OCI-LY7 (cell line): ENCODE measurements at regions of chr2 and their contacts with region 1.

Region 1: DNA sequence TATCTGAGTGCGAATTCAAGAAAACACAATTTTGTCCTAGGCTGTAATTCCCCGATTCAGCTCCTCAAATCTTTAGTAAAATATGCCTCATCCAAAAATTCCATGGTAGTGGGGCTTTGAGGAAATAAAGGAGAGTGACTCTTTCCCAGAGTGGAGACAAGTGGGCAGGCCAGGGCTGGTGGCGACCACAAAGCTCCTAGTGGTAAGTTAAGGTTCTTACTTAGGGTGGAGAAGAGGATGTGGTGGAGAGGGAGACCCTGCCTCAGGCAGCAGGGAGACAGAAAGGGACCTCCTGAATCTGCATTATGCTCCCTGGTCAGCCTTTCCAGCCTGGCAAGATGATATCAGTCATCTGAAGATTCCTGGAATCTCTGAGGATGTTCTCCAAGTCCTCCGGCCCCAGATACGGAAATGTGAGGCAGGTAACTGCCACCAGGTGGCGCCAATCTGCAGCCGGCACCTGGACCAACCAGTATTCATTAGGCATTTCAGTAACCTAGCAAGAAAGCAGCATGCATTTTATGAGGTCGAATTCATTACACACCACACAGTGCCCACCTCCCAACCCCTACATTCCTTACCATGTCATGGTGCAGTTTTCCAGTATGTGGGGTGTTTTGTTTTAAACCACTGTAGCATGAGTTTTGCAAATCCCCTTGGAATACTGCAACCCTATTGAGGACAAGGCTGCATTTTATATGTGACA is 106.4 kb downstream of the POLE4 start:
- DNase-seq: peak; percentile 51
- H3K4me3 ChIP-seq: no peak overlapping the region
- H3K27ac ChIP-seq: no peak overlapping the region
- H3K4me1 ChIP-seq: no peaks in the 10 kb centered on the region
- CTCF ChIP-seq: peak; percentile 98

Region 2: GRCh38 chr2:74919827-74920226 is 145.0 kb before region 1 on chr2:
- CTCF ChIA-PET with region 1: no interaction called
- POLR2A ChIA-PET with region 1: no interaction called
- intact Hi-C with region 1: loop called (anchors 2 kb)
- DNase-seq: peak; percentile 62
- H3K4me3 ChIP-seq: peak overlapping the region; percentile 22
- H3K27ac ChIP-seq: no peak overlapping the region
- H3K4me1 ChIP-seq: no peaks in the 10 kb centered on the region
- CTCF ChIP-seq: peak; percentile 81

Region 3: DNA sequence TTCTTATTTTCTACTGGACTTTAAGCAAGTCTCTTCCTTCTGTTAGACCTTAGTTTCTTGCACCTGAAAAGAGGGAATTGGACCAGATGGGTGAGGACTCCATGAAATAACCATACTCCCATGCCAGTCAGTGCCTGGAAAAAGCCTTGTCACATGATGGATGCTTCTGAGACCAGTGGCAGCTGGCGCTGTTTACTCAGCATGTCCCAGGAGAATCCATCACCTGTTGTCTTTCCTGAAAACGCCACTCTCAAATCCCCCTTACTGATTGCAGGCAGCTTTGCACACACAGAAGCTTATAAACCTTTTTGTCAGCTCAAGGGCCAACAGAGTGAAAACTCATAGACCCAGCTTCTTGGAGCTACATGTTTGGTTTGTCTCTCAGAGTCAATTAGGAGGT is 11.2 kb after region 1 on chr2:
- CTCF ChIA-PET with region 1: no interaction called
- POLR2A ChIA-PET with region 1: no interaction called
- intact Hi-C with region 1: no loop called
- DNase-seq: no peak
- H3K4me3 ChIP-seq: no peak overlapping the region
- H3K27ac ChIP-seq: no peak overlapping the region
- H3K4me1 ChIP-seq: no peaks in the 10 kb centered on the region
- CTCF ChIP-seq: no peak

Region 4: DNA sequence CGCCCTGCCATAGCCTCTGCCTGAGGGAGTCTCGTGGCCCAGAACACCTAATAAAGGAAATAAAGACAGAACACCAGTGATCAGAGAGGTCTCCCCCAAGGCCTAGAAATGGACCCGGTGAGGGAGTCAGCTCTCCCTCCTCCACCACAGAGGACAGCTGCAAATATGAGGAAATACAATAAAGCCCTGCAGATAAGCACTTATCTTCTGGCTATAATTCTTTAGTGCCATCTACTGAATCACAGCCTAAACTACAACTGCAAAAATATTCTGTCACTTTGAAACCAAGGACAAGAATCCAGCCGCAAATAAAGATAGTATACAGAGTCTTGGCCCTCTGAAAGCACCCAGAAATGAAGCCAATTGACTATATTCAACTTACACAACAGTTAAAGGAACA is 176.9 kb after region 1 on chr2:
- CTCF ChIA-PET with region 1: no interaction called
- POLR2A ChIA-PET with region 1: no interaction called
- intact Hi-C with region 1: loop called (anchors 2 kb)
- DNase-seq: peak; percentile 21
- H3K4me3 ChIP-seq: no peak overlapping the region
- H3K27ac ChIP-seq: no peak overlapping the region
- H3K4me1 ChIP-seq: no peaks in the 10 kb centered on the region
- CTCF ChIP-seq: peak; percentile 79

Region 5: GRCh38 chr2:75466708-75467311 is 402.0 kb after region 1 on chr2:
- CTCF ChIA-PET with region 1: no interaction called
- POLR2A ChIA-PET with region 1: no interaction called
- intact Hi-C with region 1: loop called (anchors 2 kb)
- DNase-seq: peak; percentile 43
- H3K4me3 ChIP-seq: no peak overlapping the region
- H3K27ac ChIP-seq: no peak overlapping the region
- H3K4me1 ChIP-seq: no peaks in the 10 kb centered on the region
- CTCF ChIP-seq: peak; percentile 90

Region 6: GRCh38 chr2:75608684-75609333 is 544.0 kb after region 1 on chr2:
- CTCF ChIA-PET with region 1: no interaction called
- POLR2A ChIA-PET with region 1: no interaction called
- intact Hi-C with region 1: loop called (anchors 5 kb)
- DNase-seq: peak; percentile 20
- H3K4me3 ChIP-seq: no peak overlapping the region
- H3K27ac ChIP-seq: no peak overlapping the region
- H3K4me1 ChIP-seq: no peaks in the 10 kb centered on the region
- CTCF ChIP-seq: peak; percentile 91